ENCODE measurements at regions of chr4 and their contacts with region 1.

Region 1: DNA sequence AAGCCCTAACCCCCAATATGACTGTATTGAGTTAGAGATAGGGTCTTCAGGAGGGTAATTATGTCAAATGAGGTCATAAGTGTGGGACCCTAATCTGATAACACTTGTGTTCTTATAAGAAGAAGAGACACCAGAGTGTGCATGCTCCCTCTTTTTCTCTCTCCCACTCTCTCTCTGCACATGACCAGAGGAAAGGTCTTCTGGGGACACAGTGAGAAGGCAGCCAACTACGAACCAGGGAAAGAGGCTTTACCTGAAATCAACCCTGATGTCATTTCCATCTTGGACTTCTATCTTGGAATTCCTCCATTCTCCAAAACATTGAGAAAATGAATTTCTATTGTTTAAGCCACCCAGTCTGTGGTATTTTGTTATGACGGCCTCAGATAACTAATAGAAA is 97.2 kb upstream of the MAD2L1 start:
- DNase-seq: no peak
- ATAC-seq: peak in 2 of 4 donors; percentile 37 to 57
- H3K4me3 ChIP-seq: no peak overlapping the region
- H3K27ac ChIP-seq: no peak overlapping the region
- H3K4me1 ChIP-seq: peaks cover 0 to 13% (median 0%) of the 10 kb centered on the region in 12 donors
- H3K27me3 ChIP-seq: no peaks in the 10 kb centered on the region
- CTCF ChIP-seq: no peak
- POLR2A ChIP-seq: no peak

Region 2: GRCh38 chr4:120139392-120139791 is 24.5 kb before region 1 on chr4:
- intact Hi-C with region 1: no loop called
- DNase-seq: no peak
- ATAC-seq: no peak
- H3K4me3 ChIP-seq: no peak overlapping the region
- H3K27ac ChIP-seq: no peak overlapping the region
- H3K4me1 ChIP-seq: no peaks in the 10 kb centered on the region
- H3K27me3 ChIP-seq: no peaks in the 10 kb centered on the region
- CTCF ChIP-seq: no peak
- POLR2A ChIP-seq: no peak

Region 3: DNA sequence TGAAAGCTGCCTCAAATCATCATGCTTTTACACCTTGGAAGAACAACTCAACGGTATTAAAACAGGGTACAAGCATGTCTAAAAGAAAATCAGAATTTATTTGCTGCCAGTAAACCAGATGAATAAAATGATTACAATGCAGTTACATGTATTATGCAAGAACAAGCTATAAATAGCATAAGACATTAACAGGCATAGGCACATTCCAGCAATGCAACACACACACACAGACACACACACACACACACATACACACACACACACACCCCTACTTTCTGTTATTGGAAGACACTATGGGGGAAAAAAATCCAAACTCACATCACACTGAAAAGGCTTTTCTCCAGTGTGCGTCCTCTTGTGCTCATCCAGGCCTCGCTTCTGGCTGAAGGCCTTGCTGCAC is 546.1 kb after region 1 on chr4:
- intact Hi-C with region 1: loop called in 2 of 10 experiments (anchors 5 to 10 kb)
- DNase-seq: no peak
- ATAC-seq: peak in 3 of 4 donors; percentile 52 to 57 (median 54)
- H3K4me3 ChIP-seq: no peak overlapping the region
- H3K27ac ChIP-seq: no peak overlapping the region
- H3K4me1 ChIP-seq: peaks cover 0 to 10% (median 0%) of the 10 kb centered on the region in 12 donors
- H3K27me3 ChIP-seq: no peaks in the 10 kb centered on the region
- CTCF ChIP-seq: no peak
- POLR2A ChIP-seq: no peak